Psoas muscle (tissue), 8 donors: ENCODE measurements at regions of chr21 and their contacts with region 1.

Region 1: GRCh38 chr21:29024474-29025327 is at the start of gene USP16:
- DNase-seq: peak; percentile 95 to 97
- ATAC-seq: peak; percentile 97 to 98 (median 97)
- H3K4me3 ChIP-seq: peak within 1 kb of the TSS; percentile 79
- H3K27ac ChIP-seq: peak within 1 kb of the TSS; percentile 99
- H3K4me1 ChIP-seq: peaks cover 18% of the 10 kb centered on the region
- H3K27me3 ChIP-seq: no peaks in the 10 kb centered on the region
- CTCF ChIP-seq: peak; percentile 39
- total RNA-seq, gene USP16: 26.3 to 39.9 (median 34.4) TPM

Region 2: GRCh38 chr21:28992526-28993292 is 32.0 kb before region 1 on chr21 and contains the start of gene LTN1:
- intact Hi-C with region 1: loop called in 1 of 2 experiments (anchors 5 kb)
- DNase-seq: peak; percentile 98 to 99
- ATAC-seq: peak; percentile 99 to 100 (median 100)
- H3K4me3 ChIP-seq: peak within 1 kb of the TSS; percentile 99
- H3K27ac ChIP-seq: peak within 1 kb of the TSS; percentile 96
- H3K4me1 ChIP-seq: peaks cover 21% of the 10 kb centered on the region
- H3K27me3 ChIP-seq: no peaks in the 10 kb centered on the region
- CTCF ChIP-seq: no peak
- total RNA-seq, gene LTN1: 17.8 to 22.2 (median 19.2) TPM

Region 3: DNA sequence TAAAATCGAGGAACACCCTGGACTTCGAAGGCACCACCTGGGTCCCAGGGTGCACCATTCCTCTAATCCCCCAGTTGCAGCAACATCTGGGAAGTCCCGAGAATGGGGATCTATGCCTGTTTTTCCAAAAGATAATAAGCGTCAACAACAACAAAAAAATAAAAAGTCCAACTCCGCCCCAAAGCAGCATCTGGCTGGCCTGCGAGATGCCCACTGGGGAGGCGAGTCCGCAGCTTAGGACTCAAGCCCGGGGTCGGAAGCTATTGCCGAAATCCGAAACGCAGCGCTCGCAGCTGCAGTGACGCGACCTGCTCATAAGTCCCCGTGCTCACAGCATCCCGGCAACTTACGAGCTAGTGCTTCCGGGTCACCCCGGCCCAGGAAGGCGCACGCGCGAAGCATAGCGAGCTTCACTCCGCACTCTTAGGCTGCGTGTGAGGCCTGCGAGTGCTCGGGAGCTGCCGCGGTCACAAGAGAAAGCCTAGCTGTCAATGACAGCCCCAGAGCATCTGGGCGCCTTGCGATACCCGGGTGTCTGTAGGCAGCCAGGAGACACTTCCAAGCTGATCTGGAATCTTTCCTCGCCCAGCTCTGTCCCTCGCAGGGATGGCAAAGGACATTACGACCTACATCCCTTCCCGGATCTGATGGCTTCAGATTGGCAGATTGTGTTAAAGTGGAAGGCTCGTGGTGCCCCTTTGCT is 22.1 kb before region 1 on chr21:
- intact Hi-C with region 1: loop called in 1 of 2 experiments (anchors 1 kb)
- DNase-seq: peak; percentile 96 to 98
- ATAC-seq: peak; percentile 100
- H3K4me3 ChIP-seq: peak overlapping the region; percentile 87
- H3K27ac ChIP-seq: peak overlapping the region; percentile 99
- H3K4me1 ChIP-seq: peaks cover 5% of the 10 kb centered on the region
- H3K27me3 ChIP-seq: no peaks in the 10 kb centered on the region
- CTCF ChIP-seq: no peak

Region 4: GRCh38 chr21:29064850-29065481 is 40.3 kb after region 1 on chr21:
- intact Hi-C with region 1: loop called (anchors 5 kb)
- DNase-seq: no peak
- ATAC-seq: peak; percentile 85 to 92 (median 88)
- H3K4me3 ChIP-seq: no peak overlapping the region
- H3K27ac ChIP-seq: peak overlapping the region; percentile 84
- H3K4me1 ChIP-seq: peaks cover 19% of the 10 kb centered on the region
- H3K27me3 ChIP-seq: no peaks in the 10 kb centered on the region
- CTCF ChIP-seq: no peak

Region 5: GRCh38 chr21:29073222-29074006 is 48.7 kb after region 1 on chr21 and contains the start of gene CCT8:
- intact Hi-C with region 1: loop called in 1 of 2 experiments (anchors 5 kb)
- DNase-seq: peak; percentile 100
- ATAC-seq: peak; percentile 97 to 98 (median 97)
- H3K4me3 ChIP-seq: peak within 1 kb of the TSS; percentile 93
- H3K27ac ChIP-seq: peak within 1 kb of the TSS; percentile 98
- H3K4me1 ChIP-seq: peaks cover 23% of the 10 kb centered on the region
- H3K27me3 ChIP-seq: no peaks in the 10 kb centered on the region
- CTCF ChIP-seq: no peak
- total RNA-seq, gene CCT8: 128 to 142 (median 138) TPM

Region 6: GRCh38 chr21:29245104-29245643 is 220.5 kb after region 1 on chr21:
- intact Hi-C with region 1: no loop called
- DNase-seq: no peak
- ATAC-seq: no peak
- H3K4me3 ChIP-seq: no peak overlapping the region
- H3K27ac ChIP-seq: no peak overlapping the region
- H3K4me1 ChIP-seq: no peaks in the 10 kb centered on the region
- H3K27me3 ChIP-seq: no peaks in the 10 kb centered on the region
- CTCF ChIP-seq: no peak